Mucosa of descending colon (tissue), 3 donors: ENCODE measurements at regions of chr1 and their contacts with region 1.

Region 1: GRCh38 chr1:181424786-181425403 is 58.4 kb upstream of the CACNA1E start:
- DNase-seq: peak in 2 of 3 donors; percentile 73 to 88
- ATAC-seq: peak; percentile 84
- H3K4me3 ChIP-seq: no peak overlapping the region
- H3K4me1 ChIP-seq: no peaks in the 10 kb centered on the region
- CTCF ChIP-seq: peak; percentile 82

Region 2: DNA sequence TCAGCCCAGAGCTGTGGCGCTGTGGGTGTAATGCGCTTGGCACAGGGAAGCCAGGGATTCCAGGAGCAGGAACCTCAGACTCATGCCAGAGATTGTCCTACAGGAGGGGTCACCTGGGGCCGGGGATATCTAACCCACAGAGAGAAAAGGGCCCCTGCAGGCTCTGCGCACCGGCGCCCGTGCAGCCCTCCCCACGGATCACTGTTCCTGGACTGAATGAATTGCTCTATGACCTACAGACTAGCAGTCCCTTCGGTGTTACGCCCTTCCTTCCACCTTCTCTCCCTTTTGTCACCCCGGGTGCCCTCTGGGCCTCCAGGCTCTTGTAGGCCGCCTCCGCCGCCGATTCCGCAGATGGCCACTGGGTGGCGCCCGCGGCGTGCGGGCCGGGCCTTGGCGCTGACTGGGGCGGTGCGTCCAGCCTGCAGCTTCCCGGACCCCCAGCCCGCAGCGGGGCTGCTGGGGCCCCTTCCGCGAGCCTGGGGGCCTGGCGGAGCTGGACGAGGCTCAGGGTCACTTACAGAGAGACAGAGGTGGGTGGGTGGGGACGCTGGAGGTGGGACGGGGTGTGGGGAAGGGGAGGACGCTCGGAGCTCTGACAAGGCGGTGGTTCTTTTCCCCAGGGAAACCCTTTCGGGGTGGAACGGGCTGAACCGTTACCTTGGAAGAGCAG is 235.1 kb before region 1 on chr1:
- intact Hi-C with region 1: loop called (anchors 2 to 10 kb)
- DNase-seq: peak; percentile 63 to 81 (median 81)
- ATAC-seq: peak; percentile 92
- H3K4me3 ChIP-seq: no peak overlapping the region
- H3K4me1 ChIP-seq: peaks cover 6% of the 10 kb centered on the region
- CTCF ChIP-seq: peak; percentile 93